Endothelial cell of umbilical vein (primary cell): ENCODE measurements at regions of chr15 and their contacts with region 1.

Region 1: DNA sequence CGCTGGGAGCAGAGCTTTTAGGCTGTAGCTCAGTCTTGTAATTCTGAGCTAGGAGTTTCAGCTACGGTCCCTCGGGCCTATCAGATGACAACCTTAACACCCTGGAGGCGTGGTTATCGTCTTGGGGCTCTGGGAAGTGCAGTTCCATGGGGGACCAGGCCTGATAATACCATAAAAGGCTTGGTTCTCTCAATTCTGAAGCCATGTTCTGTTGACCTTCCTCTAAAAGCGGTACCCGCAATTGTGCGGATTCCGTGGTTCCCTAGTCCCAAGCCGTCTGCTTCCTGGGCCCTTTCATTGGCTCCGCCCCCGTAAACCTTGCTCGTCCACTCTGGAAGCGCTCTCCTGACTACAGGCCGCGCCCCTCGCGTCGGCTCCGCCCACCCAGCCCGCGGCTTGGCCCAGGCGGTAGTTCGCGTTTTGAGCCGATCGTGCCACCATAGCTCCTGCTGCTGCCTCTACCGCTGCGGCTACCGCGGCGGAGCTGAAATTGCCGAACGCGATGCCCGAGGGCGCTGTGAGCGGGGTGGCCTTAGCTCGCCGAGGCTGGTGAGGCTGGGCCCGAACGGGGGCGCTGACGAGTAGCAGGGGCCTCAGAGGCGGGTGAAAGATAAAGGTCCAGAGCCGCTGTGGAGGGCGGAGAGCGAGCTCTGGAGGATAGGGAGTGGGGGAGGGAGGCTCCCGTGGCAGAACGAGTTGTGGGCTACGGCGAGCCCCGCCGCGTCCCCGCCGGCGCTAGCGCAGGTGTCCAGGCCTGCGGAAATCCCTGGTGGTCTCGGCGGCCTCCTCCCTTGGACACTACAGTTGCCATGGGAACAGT is at the start of gene MAPKBP1:
- DNase-seq: peak; percentile 99
- H3K4me3 ChIP-seq: peak within 1 kb of the TSS; percentile 35 to 69 (median 56)
- H3K27ac ChIP-seq: peak within 1 kb of the TSS; percentile 48
- H3K4me1 ChIP-seq: peaks cover 54% of the 10 kb centered on the region
- H3K27me3 ChIP-seq: no peaks in the 10 kb centered on the region
- CTCF ChIP-seq: peak; percentile 93 to 94
- POLR2A ChIP-seq: no peak
- total RNA-seq, gene MAPKBP1: 49.1 and 55.8 TPM in 2 replicates

Region 2: DNA sequence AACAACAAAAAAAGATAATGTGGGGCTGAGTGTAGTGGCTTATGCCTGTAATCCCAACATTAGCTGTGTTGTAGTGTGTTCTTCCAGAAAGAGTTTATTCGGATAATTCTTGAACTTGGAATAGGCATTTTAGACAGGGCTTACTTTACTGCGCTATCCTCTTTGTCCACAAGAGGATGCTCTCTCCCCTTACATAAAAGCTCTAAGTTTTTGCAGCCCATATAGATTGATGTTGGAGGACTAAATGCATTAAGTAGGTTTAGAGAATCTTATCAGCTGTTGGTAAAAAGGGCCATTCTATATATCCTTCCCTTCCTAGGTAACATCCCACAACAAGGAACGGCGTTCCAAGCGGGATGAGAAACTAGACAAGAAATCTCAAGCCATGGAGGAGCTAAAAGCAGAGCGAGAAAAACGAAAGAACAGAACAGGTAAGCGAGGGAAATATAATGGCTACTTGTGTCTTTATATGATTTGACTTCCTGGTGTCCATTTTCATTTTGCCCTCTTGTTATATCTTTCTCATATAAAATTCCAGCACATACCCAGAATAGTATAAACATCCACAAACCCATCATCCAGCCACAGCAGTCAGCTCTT is 308.4 kb before region 1 on chr15:
- CTCF ChIA-PET with region 1: interaction called, 29 read pairs
- POLR2A ChIA-PET with region 1: no interaction called
- dilution Hi-C with region 1: no loop called
- intact Hi-C with region 1: loop called (anchors 5 kb)
- DNase-seq: peak; percentile 75
- H3K4me3 ChIP-seq: no peak overlapping the region
- H3K27ac ChIP-seq: no peak overlapping the region
- H3K4me1 ChIP-seq: peaks cover 5% of the 10 kb centered on the region
- H3K27me3 ChIP-seq: no peaks in the 10 kb centered on the region
- CTCF ChIP-seq: peak; percentile 79 to 89
- POLR2A ChIP-seq: no peak

Region 3: GRCh38 chr15:41695750-41696426 is 78.4 kb before region 1 on chr15:
- CTCF ChIA-PET with region 1: interaction called, 25 read pairs
- POLR2A ChIA-PET with region 1: no interaction called
- dilution Hi-C with region 1: no loop called
- intact Hi-C with region 1: no loop called
- DNase-seq: peak; percentile 77
- H3K4me3 ChIP-seq: peak overlapping the region in 1 of 3 experiments; percentile 33
- H3K27ac ChIP-seq: peak overlapping the region; percentile 52
- H3K4me1 ChIP-seq: peaks cover 16% of the 10 kb centered on the region
- H3K27me3 ChIP-seq: no peaks in the 10 kb centered on the region
- CTCF ChIP-seq: peak in 1 of 2 donors; percentile 20
- POLR2A ChIP-seq: peak; percentile 23

Region 4: GRCh38 chr15:41811432-41812195 is 37.3 kb after region 1 on chr15:
- CTCF ChIA-PET with region 1: interaction called, 754 read pairs
- POLR2A ChIA-PET with region 1: interaction called, 10 read pairs
- dilution Hi-C with region 1: no loop called
- intact Hi-C with region 1: loop called (anchors 1 kb)
- DNase-seq: peak; percentile 84
- H3K4me3 ChIP-seq: no peak overlapping the region
- H3K27ac ChIP-seq: no peak overlapping the region
- H3K4me1 ChIP-seq: peaks cover 8% of the 10 kb centered on the region
- H3K27me3 ChIP-seq: no peaks in the 10 kb centered on the region
- CTCF ChIP-seq: peak; percentile 93 to 94
- POLR2A ChIP-seq: no peak

Region 5: DNA sequence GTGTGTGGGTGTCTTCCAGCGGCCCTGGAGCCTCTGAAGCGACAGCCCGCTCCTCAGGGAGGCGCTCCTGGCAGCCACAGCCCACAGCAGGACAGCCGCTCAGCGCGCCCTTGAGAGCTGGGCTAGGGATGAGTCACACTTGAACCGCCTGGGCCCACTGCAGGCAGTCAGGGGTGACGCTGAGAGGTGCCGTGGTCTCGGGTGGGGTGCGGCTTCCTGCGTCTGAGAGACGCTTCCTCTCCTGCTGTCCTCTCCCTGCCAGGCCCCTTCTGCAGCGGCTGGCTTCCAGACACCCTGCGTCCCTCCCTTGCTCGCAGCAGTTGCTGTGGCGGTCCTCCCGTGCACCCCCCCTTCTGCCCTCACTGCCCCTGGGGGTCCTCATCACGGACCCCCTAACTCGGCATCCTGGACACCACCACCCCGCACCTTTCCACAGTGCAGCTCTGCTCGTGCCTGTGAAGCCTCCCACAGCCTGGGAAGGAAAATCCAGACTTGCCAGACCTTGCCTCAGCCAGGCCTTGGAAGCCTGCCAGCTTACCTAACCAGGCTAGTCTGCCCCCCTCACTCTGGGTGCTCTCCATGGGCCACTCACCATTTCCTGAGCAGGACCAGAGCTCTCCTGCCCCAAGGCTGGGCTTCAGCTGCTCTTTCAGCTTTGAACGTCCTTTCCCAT is 120.7 kb after region 1 on chr15:
- CTCF ChIA-PET with region 1: interaction called, 4 read pairs
- POLR2A ChIA-PET with region 1: no interaction called
- dilution Hi-C with region 1: no loop called
- intact Hi-C with region 1: loop called (anchors 2 kb)
- DNase-seq: peak; percentile 80
- H3K4me3 ChIP-seq: no peak overlapping the region
- H3K27ac ChIP-seq: peak overlapping the region; percentile 73
- H3K4me1 ChIP-seq: peaks cover 16% of the 10 kb centered on the region
- H3K27me3 ChIP-seq: no peaks in the 10 kb centered on the region
- CTCF ChIP-seq: peak in 1 of 2 donors; percentile 43
- POLR2A ChIP-seq: peak; percentile 82

Region 6: GRCh38 chr15:42056934-42057779 is 282.9 kb after region 1 on chr15:
- CTCF ChIA-PET with region 1: no interaction called
- POLR2A ChIA-PET with region 1: no interaction called
- dilution Hi-C with region 1: no loop called
- intact Hi-C with region 1: loop called (anchors 5 kb)
- DNase-seq: peak; percentile 84
- H3K4me3 ChIP-seq: peak overlapping the region in 1 of 3 experiments; percentile 3
- H3K27ac ChIP-seq: no peak overlapping the region
- H3K4me1 ChIP-seq: peaks cover 4% of the 10 kb centered on the region
- H3K27me3 ChIP-seq: peaks cover 2 to 7% of the 10 kb centered on the region in 2 experiments
- CTCF ChIP-seq: peak; percentile 81 to 85
- POLR2A ChIP-seq: no peak